B cell (primary cell): ENCODE measurements at regions of chr9 and their contacts with region 1.

Region 1: GRCh38 chr9:33167046-33167808 is at the start of gene B4GALT1:
- DNase-seq: peak; percentile 96
- ATAC-seq: peak; percentile 77
- H3K4me3 ChIP-seq: peak within 1 kb of the TSS; percentile 95 to 99 (median 98)
- H3K4me3 Mint-ChIP-seq: peak within 1 kb of the TSS; percentile 99
- H3K27ac ChIP-seq: peak within 1 kb of the TSS; percentile 90 to 92
- H3K27ac Mint-ChIP-seq: peak within 1 kb of the TSS; percentile 100
- H3K4me1 ChIP-seq: peaks cover 46 to 59% of the 10 kb centered on the region in 2 donors
- H3K4me1 Mint-ChIP-seq: peaks cover 58% of the 10 kb centered on the region
- H3K27me3 ChIP-seq: no peaks in the 10 kb centered on the region
- H3K27me3 Mint-ChIP-seq: no peaks in the 10 kb centered on the region
- CTCF ChIP-seq: no peak
- total RNA-seq, gene B4GALT1: 197 and 201 TPM in 2 replicates

Region 2: GRCh38 chr9:33024966-33025571 is 142.2 kb before region 1 on chr9 and contains the start of gene DNAJA1:
- CTCF ChIA-PET with region 1: no interaction called
- POLR2A ChIA-PET with region 1: interaction called, 3 read pairs
- intact Hi-C with region 1: loop called (anchors 2 kb)
- DNase-seq: peak; percentile 96
- ATAC-seq: peak; percentile 83
- H3K4me3 ChIP-seq: peak within 1 kb of the TSS; percentile 74 to 100 (median 100)
- H3K4me3 Mint-ChIP-seq: peak within 1 kb of the TSS; percentile 97
- H3K27ac ChIP-seq: peak within 1 kb of the TSS; percentile 99
- H3K27ac Mint-ChIP-seq: peak within 1 kb of the TSS; percentile 95
- H3K4me1 ChIP-seq: peaks cover 17 to 34% of the 10 kb centered on the region in 2 donors
- H3K4me1 Mint-ChIP-seq: peaks cover 59% of the 10 kb centered on the region
- H3K27me3 ChIP-seq: no peaks in the 10 kb centered on the region
- H3K27me3 Mint-ChIP-seq: no peaks in the 10 kb centered on the region
- CTCF ChIP-seq: no peak
- total RNA-seq, gene DNAJA1: 66.6 and 68.6 TPM in 2 replicates

Region 3: DNA sequence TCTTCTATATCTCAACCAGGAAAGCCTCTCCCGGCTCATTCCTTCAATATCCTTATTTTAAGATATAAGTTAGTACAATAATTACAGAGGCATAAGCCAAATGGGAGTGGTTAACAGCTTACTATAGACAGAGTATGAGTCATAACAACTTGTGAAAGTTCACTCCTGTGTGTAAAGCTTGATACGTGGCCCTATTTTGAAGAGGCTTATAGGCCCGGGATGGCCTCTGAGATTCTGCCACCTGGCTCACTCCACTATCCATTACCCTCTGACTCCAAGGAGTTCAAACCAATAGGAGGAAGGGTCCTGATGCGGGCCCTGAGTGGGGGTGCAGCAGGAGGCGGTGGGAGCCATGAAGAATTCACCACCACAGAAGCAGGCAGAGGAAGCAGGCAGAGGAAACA is 36.7 kb before region 1 on chr9:
- CTCF ChIA-PET with region 1: interaction called, 23 read pairs
- POLR2A ChIA-PET with region 1: interaction called, 23 read pairs
- intact Hi-C with region 1: loop called (anchors 1 kb)
- DNase-seq: no peak
- ATAC-seq: peak; percentile 32
- H3K4me3 ChIP-seq: peak overlapping the region in 1 of 5 experiments; percentile 17
- H3K4me3 Mint-ChIP-seq: peak overlapping the region; percentile 58
- H3K27ac ChIP-seq: peak overlapping the region; percentile 71 to 93
- H3K27ac Mint-ChIP-seq: peak overlapping the region; percentile 88
- H3K4me1 ChIP-seq: peaks cover 66 to 81% of the 10 kb centered on the region in 2 donors
- H3K4me1 Mint-ChIP-seq: peaks cover 92% of the 10 kb centered on the region
- H3K27me3 ChIP-seq: no peaks in the 10 kb centered on the region
- H3K27me3 Mint-ChIP-seq: no peaks in the 10 kb centered on the region
- CTCF ChIP-seq: no peak

Region 4: DNA sequence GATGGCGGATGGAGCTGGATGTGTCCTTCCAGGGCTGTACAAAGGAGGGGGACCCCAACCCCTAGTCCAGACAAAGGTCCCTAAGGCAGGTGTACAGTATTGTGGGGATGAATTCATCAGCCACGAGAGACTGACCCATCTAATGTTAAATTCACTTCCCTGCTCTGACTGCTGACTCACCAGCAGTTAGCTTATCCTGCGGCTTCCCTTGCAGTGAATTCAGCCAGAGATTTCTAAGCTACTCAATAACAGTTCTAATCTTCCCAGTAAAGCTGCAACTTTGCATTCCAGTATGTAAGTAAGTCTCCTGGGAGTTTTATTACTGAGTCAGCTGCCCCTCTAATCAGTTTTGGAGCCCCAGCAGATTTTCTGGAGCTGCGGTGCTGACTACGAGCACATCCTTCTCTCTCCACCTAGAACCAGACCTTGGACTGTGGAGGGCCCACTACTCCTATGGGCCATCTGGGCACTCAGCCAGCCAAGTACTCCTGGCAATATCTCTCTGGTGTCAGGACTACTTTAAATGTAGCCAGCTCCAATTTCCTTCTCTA is 16.1 kb before region 1 on chr9:
- CTCF ChIA-PET with region 1: interaction called, 9 read pairs
- POLR2A ChIA-PET with region 1: interaction called, 44 read pairs
- intact Hi-C with region 1: loop called (anchors 2 kb)
- DNase-seq: no peak
- ATAC-seq: no peak
- H3K4me3 ChIP-seq: peak overlapping the region in 2 of 5 experiments; percentile 12 to 26
- H3K4me3 Mint-ChIP-seq: peak overlapping the region; percentile 29
- H3K27ac ChIP-seq: peak overlapping the region; percentile 42 to 92
- H3K27ac Mint-ChIP-seq: peak overlapping the region; percentile 60
- H3K4me1 ChIP-seq: peaks cover 86 to 91% of the 10 kb centered on the region in 2 donors
- H3K4me1 Mint-ChIP-seq: peaks cover 85% of the 10 kb centered on the region
- H3K27me3 ChIP-seq: no peaks in the 10 kb centered on the region
- H3K27me3 Mint-ChIP-seq: no peaks in the 10 kb centered on the region
- CTCF ChIP-seq: no peak

Region 5: GRCh38 chr9:33202552-33203201 is 35.5 kb after region 1 on chr9:
- CTCF ChIA-PET with region 1: interaction called, 4 read pairs
- POLR2A ChIA-PET with region 1: interaction called, 14 read pairs
- intact Hi-C with region 1: loop called (anchors 1 kb)
- DNase-seq: peak; percentile 91
- ATAC-seq: peak; percentile 99
- H3K4me3 ChIP-seq: peak overlapping the region in 1 of 5 experiments; percentile 4
- H3K4me3 Mint-ChIP-seq: peak overlapping the region; percentile 86
- H3K27ac ChIP-seq: peak overlapping the region in 1 of 2 donors; percentile 39
- H3K27ac Mint-ChIP-seq: peak overlapping the region; percentile 87
- H3K4me1 ChIP-seq: peaks cover 14 to 16% of the 10 kb centered on the region in 2 donors
- H3K4me1 Mint-ChIP-seq: peaks cover 20% of the 10 kb centered on the region
- H3K27me3 ChIP-seq: no peaks in the 10 kb centered on the region
- H3K27me3 Mint-ChIP-seq: no peaks in the 10 kb centered on the region
- CTCF ChIP-seq: no peak